CD4-positive, alpha-beta T cell (primary cell): ENCODE measurements at regions of chr16 and their contacts with region 1.

Region 1: DNA sequence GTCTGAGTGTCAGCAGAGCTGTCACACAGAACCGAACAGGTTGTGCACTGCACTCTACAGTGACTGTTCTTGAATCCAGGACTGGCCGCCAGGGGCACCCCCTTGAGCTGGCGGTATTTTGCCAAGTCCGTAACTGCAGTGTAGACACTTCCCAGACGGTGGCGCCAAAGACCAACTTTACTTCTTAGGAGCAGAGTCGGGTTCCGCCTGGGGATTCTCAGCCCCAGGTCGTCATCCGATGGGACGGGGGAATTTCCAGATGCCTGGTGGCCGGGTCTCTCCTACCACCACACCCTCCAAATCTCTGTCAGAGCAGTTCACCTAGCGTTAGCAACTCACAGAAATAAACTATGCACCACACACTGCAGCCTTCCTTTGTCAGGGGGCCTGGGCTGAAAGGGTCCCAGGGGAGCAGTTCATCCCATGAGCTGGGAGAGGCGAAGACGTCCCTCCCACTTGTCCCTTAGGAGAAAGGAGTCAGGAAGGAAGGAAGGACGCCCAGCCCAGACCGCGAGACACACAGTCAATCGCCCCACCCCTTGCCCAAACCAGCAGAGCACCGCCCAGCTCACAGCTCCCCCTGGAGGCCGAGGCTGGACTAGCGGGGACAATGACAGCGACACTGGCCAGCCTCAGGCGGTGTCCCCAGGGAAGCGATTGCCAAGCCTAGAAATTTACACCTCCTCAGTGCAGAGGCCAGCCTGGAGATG is 7.4 kb upstream of the RIPOR1 start:
- DNase-seq: peak; percentile 93 to 99 (median 97)
- ATAC-seq: peak; percentile 90
- H3K4me3 ChIP-seq: peak overlapping the region; percentile 67
- H3K4me3 Mint-ChIP-seq: peak overlapping the region; percentile 87
- H3K27ac ChIP-seq: peak overlapping the region; percentile 96 to 99
- H3K27ac Mint-ChIP-seq: peak overlapping the region; percentile 90
- H3K4me1 ChIP-seq: peaks cover 22% of the 10 kb centered on the region
- H3K4me1 Mint-ChIP-seq: peaks cover 15% of the 10 kb centered on the region
- H3K27me3 ChIP-seq: no peaks in the 10 kb centered on the region
- H3K27me3 Mint-ChIP-seq: no peaks in the 10 kb centered on the region
- CTCF ChIP-seq: peak; percentile 92

Region 2: DNA sequence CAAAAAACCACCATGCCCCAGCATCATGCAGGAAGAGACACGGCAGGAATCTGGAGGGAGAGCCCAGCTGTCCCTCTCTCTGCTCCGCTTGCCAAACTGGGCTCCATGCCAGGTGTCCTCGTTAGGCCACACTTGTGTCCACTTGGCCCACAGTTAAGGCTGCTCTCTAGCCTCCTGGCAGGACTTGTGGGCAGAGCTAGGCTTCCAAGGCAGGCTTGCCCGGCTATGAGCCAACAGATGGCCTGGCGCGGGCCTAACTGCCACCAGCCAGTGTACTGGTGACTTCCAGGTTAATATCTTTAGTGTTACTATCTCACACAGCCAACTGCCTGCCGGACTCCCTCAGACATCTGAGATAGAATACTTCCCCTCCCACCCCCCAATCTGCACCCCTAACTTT is 50.9 kb before region 1 on chr16:
- CTCF ChIA-PET with region 1: no interaction called
- POLR2A ChIA-PET with region 1: no interaction called
- intact Hi-C with region 1: no loop called
- DNase-seq: no peak
- ATAC-seq: no peak
- H3K4me3 ChIP-seq: no peak overlapping the region
- H3K4me3 Mint-ChIP-seq: no peak overlapping the region
- H3K27ac ChIP-seq: no peak overlapping the region
- H3K27ac Mint-ChIP-seq: no peak overlapping the region
- H3K4me1 ChIP-seq: peaks cover 28% of the 10 kb centered on the region
- H3K4me1 Mint-ChIP-seq: peaks cover 53% of the 10 kb centered on the region
- H3K27me3 ChIP-seq: no peaks in the 10 kb centered on the region
- H3K27me3 Mint-ChIP-seq: no peaks in the 10 kb centered on the region
- CTCF ChIP-seq: no peak

Region 3: GRCh38 chr16:67480833-67481560 is 40.3 kb before region 1 on chr16 and contains the start of gene ATP6V0D1:
- CTCF ChIA-PET with region 1: interaction called, 48 read pairs
- POLR2A ChIA-PET with region 1: interaction called, 9 read pairs
- intact Hi-C with region 1: loop called (anchors 2 to 5 kb)
- DNase-seq: peak; percentile 96 to 100 (median 99)
- ATAC-seq: peak; percentile 87
- H3K4me3 ChIP-seq: peak within 1 kb of the TSS; percentile 100
- H3K4me3 Mint-ChIP-seq: peak within 1 kb of the TSS; percentile 98
- H3K27ac ChIP-seq: peak within 1 kb of the TSS; percentile 98 to 100
- H3K27ac Mint-ChIP-seq: peak within 1 kb of the TSS; percentile 95
- H3K4me1 ChIP-seq: peaks cover 53% of the 10 kb centered on the region
- H3K4me1 Mint-ChIP-seq: peaks cover 54% of the 10 kb centered on the region
- H3K27me3 ChIP-seq: no peaks in the 10 kb centered on the region
- H3K27me3 Mint-ChIP-seq: no peaks in the 10 kb centered on the region
- CTCF ChIP-seq: peak; percentile 81
- total RNA-seq, gene ATP6V0D1: 39.4 to 41.7 TPM

Region 4: GRCh38 chr16:67537270-67537635 is 16.0 kb after region 1 on chr16:
- CTCF ChIA-PET with region 1: interaction called, 101 read pairs
- POLR2A ChIA-PET with region 1: interaction called, 19 read pairs
- intact Hi-C with region 1: loop called in 1 of 2 experiments (anchors 2 kb)
- DNase-seq: peak in 10 of 14 experiments; percentile 27 to 77 (median 57)
- ATAC-seq: peak; percentile 52
- H3K4me3 ChIP-seq: peak overlapping the region; percentile 84
- H3K4me3 Mint-ChIP-seq: peak overlapping the region; percentile 86
- H3K27ac ChIP-seq: peak overlapping the region; percentile 69 to 73
- H3K27ac Mint-ChIP-seq: peak overlapping the region; percentile 66
- H3K4me1 ChIP-seq: peaks cover 37% of the 10 kb centered on the region
- H3K4me1 Mint-ChIP-seq: peaks cover 49% of the 10 kb centered on the region
- H3K27me3 ChIP-seq: no peaks in the 10 kb centered on the region
- H3K27me3 Mint-ChIP-seq: no peaks in the 10 kb centered on the region
- CTCF ChIP-seq: no peak

Region 5: DNA sequence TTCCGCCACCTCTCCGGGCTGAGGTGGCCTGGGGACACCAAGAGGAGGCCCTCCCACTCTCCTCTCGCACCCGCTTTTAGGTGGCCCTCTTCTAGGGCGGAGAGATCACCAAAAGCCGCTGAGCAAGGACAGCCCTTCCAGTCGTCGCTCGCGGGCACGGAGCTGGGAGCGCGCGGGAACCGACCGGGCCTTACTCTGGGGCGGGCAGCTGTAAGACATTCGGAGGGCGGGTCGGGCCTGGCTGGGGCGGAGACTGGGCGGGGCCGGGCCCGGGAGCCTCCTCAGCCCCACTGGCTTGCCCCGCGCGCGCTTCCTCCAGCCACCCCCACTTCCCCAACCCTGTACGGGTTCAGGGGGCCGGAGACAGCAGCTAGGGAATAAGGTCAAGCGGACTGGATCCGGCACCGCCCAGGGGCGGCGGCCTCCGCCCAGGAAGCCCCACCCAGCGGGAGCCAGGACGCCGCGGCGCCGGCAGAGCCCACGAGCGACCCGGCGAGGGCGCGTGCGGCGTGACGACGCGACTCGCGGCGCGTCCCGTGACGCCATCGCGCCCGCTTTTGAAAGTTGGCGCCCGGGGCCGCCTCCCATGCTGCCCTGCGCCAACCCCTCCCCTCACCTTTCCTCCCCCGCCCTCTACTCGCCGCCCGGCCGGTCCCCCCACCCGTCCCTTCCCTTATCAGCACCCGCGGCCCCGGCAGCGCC is 40.7 kb after region 1 on chr16:
- CTCF ChIA-PET with region 1: interaction called, 29 read pairs
- POLR2A ChIA-PET with region 1: interaction called, 20 read pairs
- intact Hi-C with region 1: loop called (anchors 1 to 5 kb)
- DNase-seq: peak; percentile 93 to 99 (median 96)
- ATAC-seq: peak; percentile 74
- H3K4me3 ChIP-seq: peak overlapping the region; percentile 83
- H3K4me3 Mint-ChIP-seq: peak overlapping the region; percentile 91
- H3K27ac ChIP-seq: peak overlapping the region; percentile 82 to 86
- H3K27ac Mint-ChIP-seq: peak overlapping the region; percentile 93
- H3K4me1 ChIP-seq: peaks cover 46% of the 10 kb centered on the region
- H3K4me1 Mint-ChIP-seq: peaks cover 45% of the 10 kb centered on the region
- H3K27me3 ChIP-seq: no peaks in the 10 kb centered on the region
- H3K27me3 Mint-ChIP-seq: no peaks in the 10 kb centered on the region
- CTCF ChIP-seq: peak; percentile 18

Region 6: DNA sequence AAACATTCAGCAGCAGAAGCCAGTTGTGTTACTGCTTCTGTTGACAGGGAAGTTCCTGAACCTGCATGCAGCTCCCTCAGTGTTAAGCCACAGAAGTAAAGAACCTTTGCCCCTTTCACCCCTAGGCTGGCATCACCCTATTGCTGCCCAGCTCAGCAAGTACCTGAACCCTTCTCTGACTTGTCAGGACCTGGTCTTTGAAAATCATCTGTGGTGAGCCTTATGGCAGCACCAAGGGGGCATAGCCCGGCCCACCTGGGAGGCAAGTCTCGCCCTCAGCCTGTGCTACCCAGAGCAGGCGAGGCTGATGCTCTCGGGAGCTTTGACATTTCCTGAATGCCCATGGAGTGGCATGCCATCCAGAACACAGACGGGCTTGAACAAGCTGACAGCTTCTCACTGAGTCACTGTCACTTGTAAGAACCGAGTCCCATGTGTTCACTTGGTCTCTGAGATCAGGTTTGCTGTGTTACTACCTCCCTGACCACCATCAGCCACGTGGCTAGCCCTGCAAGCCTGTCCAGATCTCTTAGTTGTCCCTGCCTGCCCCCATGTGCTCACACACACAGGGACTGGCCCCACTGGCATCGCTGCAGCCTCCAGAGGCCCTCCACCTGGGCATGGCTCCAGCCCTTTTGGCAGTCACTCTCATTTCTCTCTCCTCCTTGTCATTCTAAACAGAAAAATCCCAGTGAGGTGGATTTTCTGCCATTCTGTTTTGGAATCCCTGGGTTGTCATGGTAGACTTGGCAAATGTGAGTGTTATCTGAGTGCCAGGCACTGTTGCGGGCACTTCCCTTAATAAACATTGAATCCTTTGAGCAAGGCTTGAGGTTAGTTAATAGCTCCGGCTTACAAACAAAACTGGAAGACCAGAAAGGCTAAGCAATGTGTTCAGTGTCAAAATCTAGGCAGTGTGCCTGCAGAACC is 120.8 kb after region 1 on chr16:
- CTCF ChIA-PET with region 1: interaction called, 65 read pairs
- POLR2A ChIA-PET with region 1: interaction called, 24 read pairs
- intact Hi-C with region 1: loop called (anchors 1 kb)
- DNase-seq: no peak
- ATAC-seq: no peak
- H3K4me3 ChIP-seq: no peak overlapping the region
- H3K4me3 Mint-ChIP-seq: no peak overlapping the region
- H3K27ac ChIP-seq: no peak overlapping the region
- H3K27ac Mint-ChIP-seq: no peak overlapping the region
- H3K4me1 ChIP-seq: peaks cover 31% of the 10 kb centered on the region
- H3K4me1 Mint-ChIP-seq: no peaks in the 10 kb centered on the region
- H3K27me3 ChIP-seq: no peaks in the 10 kb centered on the region
- H3K27me3 Mint-ChIP-seq: no peaks in the 10 kb centered on the region
- CTCF ChIP-seq: no peak

Region 7: GRCh38 chr16:67672739-67673662 is 151.8 kb after region 1 on chr16:
- CTCF ChIA-PET with region 1: interaction called, 81 read pairs
- POLR2A ChIA-PET with region 1: interaction called, 13 read pairs
- intact Hi-C with region 1: loop called (anchors 1 kb)
- DNase-seq: peak in 12 of 14 experiments; percentile 31 to 75 (median 50)
- ATAC-seq: peak; percentile 20
- H3K4me3 ChIP-seq: no peak overlapping the region
- H3K4me3 Mint-ChIP-seq: no peak overlapping the region
- H3K27ac ChIP-seq: no peak overlapping the region
- H3K27ac Mint-ChIP-seq: no peak overlapping the region
- H3K4me1 ChIP-seq: peaks cover 10% of the 10 kb centered on the region
- H3K4me1 Mint-ChIP-seq: peaks cover 7% of the 10 kb centered on the region
- H3K27me3 ChIP-seq: no peaks in the 10 kb centered on the region
- H3K27me3 Mint-ChIP-seq: no peaks in the 10 kb centered on the region
- CTCF ChIP-seq: peak; percentile 64

Region 8: GRCh38 chr16:68229431-68230198 is 708.4 kb after region 1 on chr16:
- CTCF ChIA-PET with region 1: interaction called, 3 read pairs
- POLR2A ChIA-PET with region 1: no interaction called
- intact Hi-C with region 1: loop called in 1 of 2 experiments (anchors 5 kb)
- DNase-seq: peak in 11 of 14 experiments; percentile 28 to 72 (median 46)
- ATAC-seq: peak; percentile 61
- H3K4me3 ChIP-seq: no peak overlapping the region
- H3K4me3 Mint-ChIP-seq: no peak overlapping the region
- H3K27ac ChIP-seq: no peak overlapping the region
- H3K27ac Mint-ChIP-seq: peak overlapping the region; percentile 67
- H3K4me1 ChIP-seq: peaks cover 23% of the 10 kb centered on the region
- H3K4me1 Mint-ChIP-seq: peaks cover 40% of the 10 kb centered on the region
- H3K27me3 ChIP-seq: no peaks in the 10 kb centered on the region
- H3K27me3 Mint-ChIP-seq: no peaks in the 10 kb centered on the region
- CTCF ChIP-seq: peak; percentile 95

Region 9: DNA sequence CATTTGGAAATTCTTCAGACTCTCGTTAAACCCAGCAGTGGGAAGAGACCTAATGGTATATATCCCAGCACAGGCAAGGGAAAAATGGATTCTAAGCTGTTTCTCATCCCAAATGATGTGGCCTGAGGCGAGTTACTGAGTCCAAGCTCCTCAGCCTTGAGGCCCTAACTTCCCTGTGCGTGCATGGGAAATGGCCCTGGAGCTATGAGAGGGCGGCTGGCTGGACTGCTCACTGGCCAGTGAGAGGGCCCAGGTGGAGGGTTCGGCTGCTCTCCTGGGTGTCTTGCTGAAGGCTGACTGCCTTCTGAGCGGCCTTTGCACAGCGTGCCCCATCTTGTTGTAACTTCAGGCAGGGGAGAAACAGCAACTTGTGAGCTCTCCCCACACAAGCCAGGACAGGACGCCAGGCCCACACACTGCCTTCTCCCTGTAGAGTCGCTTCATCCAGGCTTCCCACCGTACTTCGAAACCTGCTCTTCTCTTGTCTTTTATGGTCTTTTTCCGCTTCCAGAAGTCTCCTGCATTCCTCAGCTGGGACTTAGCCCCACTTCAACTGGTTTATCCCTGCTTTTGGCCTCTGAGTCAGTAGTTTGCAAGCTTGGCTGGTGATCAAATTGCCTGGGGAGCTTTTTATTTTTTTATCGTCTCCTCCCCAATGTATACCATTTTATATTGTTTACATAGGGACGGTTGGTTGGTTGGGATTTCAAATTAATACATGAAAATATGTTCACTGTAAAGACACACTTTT is 1137.2 kb after region 1 on chr16:
- CTCF ChIA-PET with region 1: no interaction called
- POLR2A ChIA-PET with region 1: no interaction called
- intact Hi-C with region 1: no loop called
- DNase-seq: no peak
- ATAC-seq: no peak
- H3K4me3 ChIP-seq: no peak overlapping the region
- H3K4me3 Mint-ChIP-seq: no peak overlapping the region
- H3K27ac ChIP-seq: no peak overlapping the region
- H3K27ac Mint-ChIP-seq: no peak overlapping the region
- H3K4me1 ChIP-seq: no peaks in the 10 kb centered on the region
- H3K4me1 Mint-ChIP-seq: no peaks in the 10 kb centered on the region
- H3K27me3 ChIP-seq: peaks cover 0 to 5% of the 10 kb centered on the region in 2 experiments
- H3K27me3 Mint-ChIP-seq: peaks cover 39% of the 10 kb centered on the region
- CTCF ChIP-seq: no peak